ENCODE measurements at regions of chr3 and their contacts with region 1.

Region 1: GRCh38 chr3:13091898-13092611 is 18.8 kb upstream of the IQSEC1 start:
- DNase-seq: peak; percentile 67
- H3K4me3 Mint-ChIP-seq: no peak overlapping the region
- H3K27ac Mint-ChIP-seq: no peak overlapping the region
- H3K4me1 Mint-ChIP-seq: peaks cover 2% of the 10 kb centered on the region
- H3K27me3 Mint-ChIP-seq: peaks cover 14% of the 10 kb centered on the region

Region 2: GRCh38 chr3:13461169-13462158 is 369.4 kb after region 1 on chr3:
- intact Hi-C with region 1: loop called (anchors 2 kb)
- DNase-seq: peak; percentile 68
- H3K4me3 Mint-ChIP-seq: no peak overlapping the region
- H3K27ac Mint-ChIP-seq: no peak overlapping the region
- H3K4me1 Mint-ChIP-seq: no peaks in the 10 kb centered on the region
- H3K27me3 Mint-ChIP-seq: peaks cover 9% of the 10 kb centered on the region

Region 3: GRCh38 chr3:13648060-13649001 is 556.3 kb after region 1 on chr3:
- intact Hi-C with region 1: loop called (anchors 10 kb)
- DNase-seq: peak; percentile 54
- H3K4me3 Mint-ChIP-seq: no peak overlapping the region
- H3K27ac Mint-ChIP-seq: no peak overlapping the region
- H3K4me1 Mint-ChIP-seq: peaks cover 3% of the 10 kb centered on the region
- H3K27me3 Mint-ChIP-seq: peaks cover 30% of the 10 kb centered on the region